HEK293 (cell line): ENCODE measurements at regions of chr12 and their contacts with region 1.

Region 1: DNA sequence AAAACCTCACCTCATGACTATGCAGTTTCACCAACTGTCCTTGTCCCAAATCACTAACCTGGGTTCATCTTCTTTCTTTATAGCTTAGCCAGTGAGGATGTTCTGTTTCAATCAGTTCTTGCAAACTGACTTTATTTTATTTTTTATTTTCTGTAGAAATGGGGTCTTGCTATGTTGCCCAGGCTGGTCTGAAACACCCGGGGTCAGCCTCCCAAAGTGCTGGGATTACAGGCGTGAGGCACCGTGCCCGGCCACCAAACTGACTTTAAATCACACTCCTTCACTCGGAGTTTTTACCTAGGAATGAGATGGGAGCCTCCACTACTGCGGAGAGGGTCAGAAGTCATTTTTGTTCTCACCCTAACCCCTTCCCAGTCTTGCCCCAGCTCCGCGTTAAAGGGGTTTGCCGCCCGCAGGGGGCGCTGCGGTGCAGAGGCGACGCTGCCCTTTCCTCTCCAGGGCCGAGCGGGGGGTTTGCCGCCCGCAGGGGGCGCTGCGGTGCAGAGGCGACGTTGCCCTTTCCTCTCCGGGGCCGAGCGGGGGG is 7.0 kb upstream of the B4GALNT3 start:
- H3K4me3 ChIP-seq: no peak overlapping the region
- H3K27ac ChIP-seq: no peak overlapping the region
- H3K4me1 ChIP-seq: peaks cover 2% of the 10 kb centered on the region; the same call in 1 of the 2 replicates
- CTCF ChIP-seq: no peak

Region 2: DNA sequence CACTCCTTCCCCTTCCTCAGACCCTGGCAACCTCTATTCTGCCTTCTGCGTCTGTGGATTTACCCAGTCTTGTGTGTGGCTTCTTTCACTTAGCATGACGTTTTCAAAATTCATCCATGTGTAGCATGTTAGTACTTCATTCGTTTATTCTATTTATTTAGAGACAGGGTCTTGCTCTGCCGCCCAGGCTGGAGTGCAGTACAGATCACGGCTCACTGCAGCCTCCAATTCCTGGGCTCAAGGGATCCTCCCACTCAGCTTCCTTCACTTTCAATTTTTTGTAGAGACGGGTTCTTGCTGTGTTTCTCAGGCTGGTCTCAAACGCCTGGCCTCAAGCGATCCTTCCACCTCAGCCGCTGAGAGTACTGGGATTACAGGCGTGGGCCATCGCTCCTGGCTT is 44.0 kb after region 1 on chr12:
- CTCF ChIA-PET with region 1: interaction called, 15 read pairs
- POLR2A ChIA-PET with region 1: no interaction called
- H3K4me3 ChIP-seq: no peak overlapping the region
- H3K27ac ChIP-seq: no peak overlapping the region
- H3K4me1 ChIP-seq: peaks cover 2% of the 10 kb centered on the region; the same call in 1 of the 2 replicates
- CTCF ChIP-seq: no peak

Region 3: DNA sequence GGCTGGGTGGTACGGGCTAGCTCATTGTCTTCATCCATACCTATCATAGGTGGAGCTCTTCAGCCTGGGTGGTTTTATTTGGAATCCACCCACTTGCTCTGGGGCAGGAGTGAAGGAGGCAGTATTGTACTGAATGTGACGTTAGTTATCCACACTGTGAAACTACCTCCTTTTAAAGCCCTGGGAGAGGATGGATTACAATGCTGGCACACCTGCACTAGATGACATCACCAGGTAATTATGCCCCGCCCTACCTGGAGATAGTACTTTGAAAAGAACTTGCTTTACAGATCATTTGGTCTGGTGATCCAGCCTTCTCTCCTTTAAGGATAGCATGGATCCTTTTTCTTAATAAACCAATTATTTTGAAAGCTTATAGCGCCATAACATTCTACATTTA is 85.0 kb after region 1 on chr12:
- CTCF ChIA-PET with region 1: interaction called, 26 read pairs
- POLR2A ChIA-PET with region 1: no interaction called
- H3K4me3 ChIP-seq: no peak overlapping the region
- H3K27ac ChIP-seq: no peak overlapping the region
- H3K4me1 ChIP-seq: no peaks in the 10 kb centered on the region; the same call in 1 of the 2 replicates
- CTCF ChIP-seq: no peak

Region 4: GRCh38 chr12:553205-554000 is 100.7 kb after region 1 on chr12:
- CTCF ChIA-PET with region 1: interaction called, 51 read pairs
- POLR2A ChIA-PET with region 1: no interaction called
- H3K4me3 ChIP-seq: no peak overlapping the region
- H3K27ac ChIP-seq: no peak overlapping the region
- H3K4me1 ChIP-seq: no peaks in the 10 kb centered on the region
- CTCF ChIP-seq: no peak